ENCODE measurements at regions of chr2 and their contacts with region 1.

Region 1: GRCh38 chr2:43239981-43240761 is 13.8 kb upstream of the ZFP36L2 start:
- DNase-seq: no peak
- ATAC-seq: peak; percentile 28
- H3K4me3 ChIP-seq: no peak overlapping the region
- H3K27ac ChIP-seq: peak overlapping the region; percentile 41 to 79
- H3K4me1 ChIP-seq: peaks cover 0 to 29% of the 10 kb centered on the region in 2 donors
- H3K27me3 ChIP-seq: no peaks in the 10 kb centered on the region
- CTCF ChIP-seq: no peak

Region 2: GRCh38 chr2:42835577-42836371 is 404.4 kb before region 1 on chr2:
- intact Hi-C with region 1: loop called in 1 of 2 experiments (anchors 10 kb)
- DNase-seq: no peak
- ATAC-seq: peak; percentile 83
- H3K4me3 ChIP-seq: no peak overlapping the region
- H3K27ac ChIP-seq: peak overlapping the region in 1 of 2 donors; percentile 54
- H3K4me1 ChIP-seq: peaks cover 6 to 14% of the 10 kb centered on the region in 2 donors
- H3K27me3 ChIP-seq: no peaks in the 10 kb centered on the region
- CTCF ChIP-seq: no peak

Region 3: DNA sequence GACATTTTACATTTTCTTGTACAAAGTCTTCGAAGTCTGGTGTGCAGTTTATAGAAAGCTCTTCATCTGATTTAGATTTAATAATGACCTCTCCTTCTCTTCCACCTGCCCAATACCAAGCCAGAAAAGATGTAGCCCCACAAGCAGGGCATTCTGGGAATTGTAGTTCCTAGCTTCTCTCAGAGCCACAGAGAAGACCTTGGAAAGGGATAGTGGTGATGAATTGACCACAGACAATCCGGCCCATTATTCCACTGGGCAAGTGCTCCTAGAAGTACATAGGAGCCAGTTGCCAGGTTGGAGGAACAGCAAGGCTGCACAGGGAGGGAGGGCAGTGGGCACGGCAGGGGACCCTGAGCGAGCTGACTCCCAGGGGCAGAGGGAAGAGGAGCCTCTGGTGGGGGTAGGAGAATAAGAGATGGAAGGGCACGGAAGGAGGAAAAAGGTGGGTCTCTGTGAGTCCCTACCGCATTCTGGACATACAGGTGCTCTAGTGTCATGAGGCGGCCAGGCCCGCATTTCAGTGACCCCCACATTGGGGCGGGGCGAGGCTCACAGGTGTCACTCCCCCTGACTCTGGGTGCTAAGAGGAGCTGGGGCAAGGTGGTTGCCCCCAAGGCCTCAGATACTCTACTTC is 295.3 kb before region 1 on chr2:
- intact Hi-C with region 1: loop called in 1 of 2 experiments (anchors 10 kb)
- DNase-seq: peak in 1 of 4 donors; percentile 53
- ATAC-seq: no peak
- H3K4me3 ChIP-seq: no peak overlapping the region
- H3K27ac ChIP-seq: no peak overlapping the region
- H3K4me1 ChIP-seq: peaks cover 8 to 20% of the 10 kb centered on the region in 2 donors
- H3K27me3 ChIP-seq: no peaks in the 10 kb centered on the region
- CTCF ChIP-seq: no peak

Region 4: GRCh38 chr2:43484323-43484930 is 244.3 kb after region 1 on chr2:
- intact Hi-C with region 1: loop called in 1 of 2 experiments (anchors 10 kb)
- DNase-seq: peak in 2 of 4 donors; percentile 72 to 87
- ATAC-seq: peak; percentile 79
- H3K4me3 ChIP-seq: no peak overlapping the region
- H3K27ac ChIP-seq: no peak overlapping the region
- H3K4me1 ChIP-seq: peaks cover 0 to 22% of the 10 kb centered on the region in 2 donors
- H3K27me3 ChIP-seq: no peaks in the 10 kb centered on the region
- CTCF ChIP-seq: peak; percentile 46 to 57